Right ventricle myocardium inferior (tissue), 1 donor: ENCODE measurements at regions of chr12 and their contacts with region 1.

Region 1: GRCh38 chr12:99767809-99768208 is 120.3 kb downstream of the GARIN6 start:
- DNase-seq: no peak
- ATAC-seq: no peak

Region 2: GRCh38 chr12:99043319-99043914 is 724.4 kb before region 1 on chr12:
- intact Hi-C with region 1: loop called (anchors 10 kb)
- DNase-seq: peak; percentile 74
- ATAC-seq: no peak

Region 3: GRCh38 chr12:99732131-99732530 is 35.7 kb before region 1 on chr12:
- intact Hi-C with region 1: no loop called
- DNase-seq: no peak
- ATAC-seq: no peak